ENCODE measurements at regions of chr11 and their contacts with region 1.

Region 1: DNA sequence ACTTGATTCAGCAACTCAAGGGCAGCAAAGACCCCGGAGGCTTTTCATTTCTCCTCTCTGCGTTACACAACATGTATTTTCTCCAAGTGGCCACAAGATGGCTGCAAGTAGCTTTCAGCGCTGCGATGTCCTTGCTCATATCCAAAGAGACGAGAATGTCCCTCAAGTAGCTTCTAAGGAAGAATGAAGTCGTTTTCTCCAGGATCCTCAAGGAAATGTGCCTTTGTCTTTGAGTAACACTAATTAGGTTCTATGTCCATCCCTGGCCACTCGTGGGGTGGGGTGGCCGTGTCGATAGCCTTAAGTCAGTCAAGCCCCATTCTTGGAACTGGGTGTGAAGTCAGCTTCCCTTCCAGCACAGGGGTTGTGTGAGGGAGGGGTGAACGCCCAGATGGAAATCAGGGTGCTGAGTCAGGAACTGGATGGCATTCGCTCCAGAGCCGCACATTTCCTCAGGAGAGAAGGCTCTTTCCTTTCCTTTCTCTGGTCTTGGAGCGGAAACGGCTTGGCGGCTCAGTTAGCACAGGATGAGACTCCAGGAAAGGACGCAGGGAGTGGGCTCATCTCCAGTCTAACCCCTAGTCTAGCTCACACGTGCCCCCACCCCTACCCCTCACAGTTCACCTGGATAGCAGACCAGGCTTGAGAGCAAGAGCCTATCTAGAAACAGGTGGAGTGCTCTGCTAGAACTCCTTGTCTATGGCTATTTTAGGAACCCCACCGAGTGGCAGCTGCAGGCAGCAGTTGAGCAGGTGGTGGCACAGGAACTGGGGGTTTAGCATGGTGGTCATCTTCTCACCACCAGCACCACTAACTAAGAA is 44.3 kb downstream of the NNMT start:
- DNase-seq: peak in 6 of 9 experiments; percentile 6 to 66 (median 42)
- ATAC-seq: peak; percentile 58
- H3K4me3 ChIP-seq: peak overlapping the region in 1 of 2 experiments; percentile 38
- H3K4me3 Mint-ChIP-seq: peak overlapping the region; percentile 68
- H3K27ac ChIP-seq: no peak overlapping the region
- H3K27ac Mint-ChIP-seq: no peak overlapping the region
- H3K4me1 ChIP-seq: peaks cover 5% of the 10 kb centered on the region
- H3K4me1 Mint-ChIP-seq: peaks cover 13% of the 10 kb centered on the region
- H3K27me3 ChIP-seq: no peaks in the 10 kb centered on the region
- H3K27me3 Mint-ChIP-seq: no peaks in the 10 kb centered on the region
- CTCF ChIP-seq: peak; percentile 71

Region 2: DNA sequence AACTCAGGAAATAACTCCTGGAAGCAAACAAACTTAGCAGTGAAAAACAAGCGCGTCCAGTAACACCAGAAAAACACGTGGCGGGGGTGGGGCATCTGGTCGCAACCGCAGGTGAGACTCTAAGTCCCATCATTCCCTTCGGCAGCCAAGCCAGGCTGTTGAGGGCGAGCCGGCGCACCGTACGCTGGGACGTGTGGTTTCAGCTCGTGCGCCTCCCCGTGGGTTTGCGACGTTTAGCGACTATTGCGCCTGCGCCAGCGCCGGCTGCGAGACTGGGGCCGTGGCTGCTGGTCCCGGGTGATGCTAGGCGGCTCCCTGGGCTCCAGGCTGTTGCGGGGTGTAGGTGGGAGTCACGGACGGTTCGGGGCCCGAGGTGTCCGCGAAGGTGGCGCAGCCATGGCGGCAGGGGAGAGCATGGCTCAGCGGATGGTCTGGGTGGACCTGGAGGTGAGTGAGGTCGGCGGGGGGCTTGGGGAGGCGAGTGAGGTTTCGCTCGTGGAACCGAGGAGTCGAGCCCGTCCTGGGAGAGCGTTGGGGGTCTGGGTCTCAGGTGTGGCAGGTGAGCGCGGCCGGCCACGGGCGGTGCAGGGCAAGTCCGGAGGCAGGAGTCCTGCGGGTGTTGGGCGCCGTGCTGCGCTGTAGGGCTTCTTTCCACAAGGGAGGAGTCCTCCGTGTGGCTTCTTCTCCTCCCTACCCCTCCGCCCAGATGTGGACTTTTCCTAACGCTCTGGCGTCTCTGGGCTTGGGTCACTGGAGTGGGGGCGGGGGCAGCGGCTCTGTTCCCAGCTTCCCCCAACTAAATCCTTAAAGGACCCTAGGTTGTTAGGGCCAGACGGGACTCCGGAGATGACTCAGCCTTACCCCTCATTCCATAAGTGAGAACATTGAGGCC is 99.0 kb after region 1 on chr11 and contains the start of gene REXO2:
- CTCF ChIA-PET with region 1: interaction called, 5 read pairs
- POLR2A ChIA-PET with region 1: no interaction called
- intact Hi-C with region 1: loop called (anchors 2 to 5 kb)
- DNase-seq: peak; percentile 86 to 98 (median 94)
- ATAC-seq: peak; percentile 99
- H3K4me3 ChIP-seq: peak within 1 kb of the TSS; percentile 86 to 99
- H3K4me3 Mint-ChIP-seq: peak within 1 kb of the TSS; percentile 98
- H3K27ac ChIP-seq: peak within 1 kb of the TSS; percentile 58 to 66
- H3K27ac Mint-ChIP-seq: peak within 1 kb of the TSS; percentile 91
- H3K4me1 ChIP-seq: peaks cover 16% of the 10 kb centered on the region
- H3K4me1 Mint-ChIP-seq: peaks cover 30% of the 10 kb centered on the region
- H3K27me3 ChIP-seq: no peaks in the 10 kb centered on the region
- H3K27me3 Mint-ChIP-seq: no peaks in the 10 kb centered on the region
- CTCF ChIP-seq: no peak
- total RNA-seq, gene REXO2: 18.8 to 19.9 TPM

Region 3: DNA sequence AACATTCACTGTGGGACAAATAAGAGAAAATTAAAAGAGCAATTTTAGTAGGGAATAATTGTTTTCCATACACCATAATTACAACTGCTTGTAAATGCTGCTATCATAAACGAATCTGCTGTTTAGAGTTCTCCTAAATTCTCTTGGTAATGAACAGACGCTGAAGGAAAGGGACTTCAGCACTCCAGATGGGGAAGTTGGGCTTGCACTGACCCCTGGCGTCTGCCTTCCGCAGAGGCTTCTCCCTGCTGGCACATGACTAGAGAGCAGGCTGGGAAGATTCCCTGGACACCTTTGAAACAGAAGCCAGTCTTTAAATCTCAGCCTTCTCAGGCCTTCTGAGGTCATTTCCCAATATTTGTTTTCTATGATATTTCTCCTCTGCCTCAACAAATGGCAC is 421.9 kb after region 1 on chr11:
- CTCF ChIA-PET with region 1: no interaction called
- POLR2A ChIA-PET with region 1: interaction called, 3 read pairs
- intact Hi-C with region 1: loop called in 1 of 2 experiments (anchors 1 kb)
- DNase-seq: peak in 2 of 9 experiments; percentile 14 to 28
- ATAC-seq: no peak
- H3K4me3 ChIP-seq: no peak overlapping the region
- H3K4me3 Mint-ChIP-seq: no peak overlapping the region
- H3K27ac ChIP-seq: no peak overlapping the region
- H3K27ac Mint-ChIP-seq: no peak overlapping the region
- H3K4me1 ChIP-seq: no peaks in the 10 kb centered on the region
- H3K4me1 Mint-ChIP-seq: no peaks in the 10 kb centered on the region
- H3K27me3 ChIP-seq: no peaks in the 10 kb centered on the region
- H3K27me3 Mint-ChIP-seq: peaks cover 20% of the 10 kb centered on the region
- CTCF ChIP-seq: no peak

Region 4: DNA sequence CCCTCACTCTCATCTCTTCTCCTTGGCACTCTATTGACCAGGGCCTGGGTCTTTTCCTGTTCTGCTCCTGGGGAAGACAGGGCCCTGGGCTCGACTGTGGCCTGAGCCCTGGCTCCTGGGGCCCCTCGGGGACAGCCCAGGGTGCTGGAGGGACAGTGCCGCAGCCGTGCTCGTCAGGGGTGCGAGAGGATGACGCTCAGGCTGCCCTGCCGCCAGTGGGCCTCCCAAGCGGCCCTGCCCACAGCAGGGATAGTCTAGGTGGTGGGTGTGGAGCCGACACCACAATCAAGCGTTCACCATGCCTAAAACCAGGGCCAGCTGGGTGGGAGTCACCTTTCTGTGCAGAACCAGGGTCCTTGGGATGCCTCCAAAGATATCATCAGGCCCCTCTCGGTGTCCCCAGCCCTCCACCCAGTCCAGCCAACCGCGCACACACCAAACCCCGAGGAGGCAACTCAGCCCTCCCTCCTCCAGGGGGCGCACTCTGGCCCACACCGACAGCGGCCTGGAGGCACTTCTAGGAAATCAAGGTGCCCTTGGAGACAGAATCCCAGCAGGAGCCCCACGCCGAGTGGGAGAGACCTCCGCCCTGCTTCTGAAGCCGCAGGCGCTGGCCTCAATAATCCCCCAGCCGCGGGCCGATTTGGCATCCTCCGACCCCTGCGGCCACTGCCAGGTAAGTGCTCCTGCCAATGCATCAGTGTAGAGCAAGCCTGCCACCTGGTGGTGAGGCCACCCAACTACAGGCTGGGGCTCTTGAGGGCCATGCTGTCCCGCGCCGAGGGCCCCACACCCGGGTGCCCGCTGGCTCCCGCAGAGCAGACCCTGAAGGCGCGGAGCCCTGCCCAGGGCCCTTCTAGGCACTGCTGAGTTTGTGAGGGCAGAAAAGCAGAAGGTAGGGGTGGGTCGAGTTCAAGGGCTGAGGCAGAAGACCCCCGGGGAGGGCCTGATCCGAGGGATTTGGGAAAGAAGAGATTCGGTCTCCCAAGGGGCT is 1935.8 kb after region 1 on chr11:
- CTCF ChIA-PET with region 1: no interaction called
- POLR2A ChIA-PET with region 1: no interaction called
- intact Hi-C with region 1: loop called in 1 of 2 experiments (anchors 5 kb)
- DNase-seq: peak; percentile 34 to 75 (median 62)
- ATAC-seq: no peak
- H3K4me3 ChIP-seq: no peak overlapping the region
- H3K4me3 Mint-ChIP-seq: no peak overlapping the region
- H3K27ac ChIP-seq: no peak overlapping the region
- H3K27ac Mint-ChIP-seq: no peak overlapping the region
- H3K4me1 ChIP-seq: no peaks in the 10 kb centered on the region
- H3K4me1 Mint-ChIP-seq: no peaks in the 10 kb centered on the region
- H3K27me3 ChIP-seq: no peaks in the 10 kb centered on the region
- H3K27me3 Mint-ChIP-seq: peaks cover 11% of the 10 kb centered on the region
- CTCF ChIP-seq: peak; percentile 72

Measured in CD8-positive, alpha-beta T cell (primary cell).